Colonic mucosa (tissue), 4 donors: ENCODE measurements at regions of chr5 and their contacts with region 1.

Region 1: GRCh38 chr5:171630027-171630669 is 155.5 kb upstream of the SMIM23 start:
- DNase-seq: peak; percentile 34
- H3K4me3 ChIP-seq: no peak overlapping the region
- H3K27ac ChIP-seq: no peak overlapping the region
- H3K4me1 ChIP-seq: no peaks in the 10 kb centered on the region
- H3K27me3 ChIP-seq: no peaks in the 10 kb centered on the region
- CTCF ChIP-seq: peak; percentile 17

Region 2: GRCh38 chr5:171783051-171783450 is 152.9 kb after region 1 on chr5:
- intact Hi-C with region 1: no loop called
- DNase-seq: no peak
- H3K4me3 ChIP-seq: no peak overlapping the region
- H3K27ac ChIP-seq: no peak overlapping the region
- H3K4me1 ChIP-seq: no peaks in the 10 kb centered on the region
- H3K27me3 ChIP-seq: no peaks in the 10 kb centered on the region
- CTCF ChIP-seq: no peak

Region 3: DNA sequence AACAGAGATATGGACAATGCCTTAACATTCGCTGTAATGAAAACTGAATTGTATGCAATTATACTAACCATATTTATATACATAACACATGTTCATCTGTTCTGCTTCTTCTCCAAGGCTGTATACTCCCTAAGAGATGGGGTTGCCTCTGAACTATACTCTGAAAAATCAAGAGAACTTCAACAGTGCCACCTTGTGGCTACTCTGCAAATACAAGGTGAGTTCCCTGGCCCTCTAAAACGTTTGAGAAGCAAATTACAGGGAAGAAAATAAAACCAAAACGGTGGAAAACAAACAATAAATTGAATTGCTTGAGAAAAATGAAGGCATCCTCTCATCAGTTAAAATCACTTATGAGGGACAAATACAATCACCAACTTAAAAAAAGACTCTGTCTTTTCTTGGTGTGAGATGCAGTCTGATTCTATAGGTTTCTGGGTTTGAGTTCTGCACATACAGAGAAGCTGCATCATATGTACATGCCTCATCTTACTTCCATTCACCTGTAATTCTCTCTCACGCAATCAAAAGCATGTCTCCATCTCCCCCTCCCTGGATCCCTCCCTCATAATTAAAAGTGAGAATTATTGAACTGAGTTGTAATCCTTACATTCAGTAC is 277.7 kb after region 1 on chr5:
- intact Hi-C with region 1: loop called (anchors 5 kb)
- DNase-seq: peak; percentile 47
- H3K4me3 ChIP-seq: no peak overlapping the region
- H3K27ac ChIP-seq: no peak overlapping the region
- H3K4me1 ChIP-seq: no peaks in the 10 kb centered on the region
- H3K27me3 ChIP-seq: no peaks in the 10 kb centered on the region
- CTCF ChIP-seq: peak; percentile 78